Activated naive CD4-positive, alpha-beta T cell treated with anti-CD3 and anti-CD28 coated beads for 36 hours (primary cell): ENCODE measurements at regions of chr10 and their contacts with region 1.

Region 1: GRCh38 chr10:6062101-6062771 is at the start of gene IL2RA:
- DNase-seq: peak; percentile 83
- H3K4me3 Mint-ChIP-seq: peak within 1 kb of the TSS; percentile 86
- H3K27ac Mint-ChIP-seq: peak within 1 kb of the TSS; percentile 94
- H3K4me1 Mint-ChIP-seq: peaks cover 46% of the 10 kb centered on the region
- H3K27me3 Mint-ChIP-seq: no peaks in the 10 kb centered on the region
- total RNA-seq, gene IL2RA: 443 to 471 TPM

Region 2: DNA sequence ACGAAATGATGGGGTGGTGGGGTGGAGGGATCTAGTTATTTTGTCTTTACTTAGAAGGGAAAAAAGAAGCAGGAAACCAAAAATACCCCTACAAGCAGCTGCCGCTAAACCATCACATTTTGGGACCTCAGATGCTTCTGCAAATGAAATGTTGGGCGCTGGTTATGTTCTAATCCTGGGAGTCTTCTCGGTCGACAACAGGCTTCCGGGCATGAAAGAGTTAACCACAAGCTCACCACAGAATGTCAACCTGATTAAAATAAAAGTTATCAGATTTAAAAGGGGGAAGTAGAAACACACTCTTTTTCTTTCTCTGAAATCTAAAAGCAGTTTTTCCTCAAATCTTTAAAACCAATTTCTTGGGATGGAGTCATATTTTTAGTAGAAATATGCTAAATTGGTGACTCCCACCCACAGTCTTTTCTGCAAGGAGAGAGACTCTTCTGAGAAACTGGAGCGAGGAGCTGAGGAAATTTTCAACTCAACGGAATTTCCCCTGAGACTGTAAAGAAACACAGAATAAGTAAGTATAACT is 16.9 kb before region 1 on chr10:
- CTCF ChIA-PET with region 1: interaction called, 8 read pairs
- intact Hi-C with region 1: loop called (anchors 1 kb)
- DNase-seq: peak; percentile 69
- H3K4me3 Mint-ChIP-seq: peak overlapping the region; percentile 56
- H3K27ac Mint-ChIP-seq: peak overlapping the region; percentile 95
- H3K4me1 Mint-ChIP-seq: peaks cover 86% of the 10 kb centered on the region
- H3K27me3 Mint-ChIP-seq: no peaks in the 10 kb centered on the region

Region 3: GRCh38 chr10:6083523-6084475 is 21.6 kb after region 1 on chr10:
- CTCF ChIA-PET with region 1: interaction called, 27 read pairs
- intact Hi-C with region 1: loop called (anchors 1 kb)
- DNase-seq: peak; percentile 92
- H3K4me3 Mint-ChIP-seq: peak overlapping the region; percentile 67
- H3K27ac Mint-ChIP-seq: peak overlapping the region; percentile 90
- H3K4me1 Mint-ChIP-seq: peaks cover 61% of the 10 kb centered on the region
- H3K27me3 Mint-ChIP-seq: no peaks in the 10 kb centered on the region

Region 4: DNA sequence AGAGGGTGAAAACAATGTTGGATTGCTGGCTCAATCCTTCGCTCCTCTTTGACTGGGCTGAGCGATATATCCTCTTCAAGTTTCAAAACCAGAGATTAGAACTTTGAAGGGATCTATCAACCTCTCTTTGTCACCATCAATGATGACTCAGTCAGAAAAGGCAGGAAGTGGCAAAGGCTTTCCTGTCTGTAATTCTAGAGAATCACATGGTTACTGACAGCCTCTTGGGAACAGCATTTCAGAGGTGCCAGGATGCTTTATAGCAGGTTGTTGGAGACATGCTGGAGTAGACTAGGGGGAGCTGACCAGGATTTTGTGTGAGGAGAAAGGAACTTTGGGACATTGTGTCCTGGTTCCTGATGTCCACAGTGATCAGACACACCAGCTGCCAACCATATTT is 436.5 kb after region 1 on chr10:
- CTCF ChIA-PET with region 1: no interaction called
- intact Hi-C with region 1: no loop called
- DNase-seq: peak; percentile 67
- H3K4me3 Mint-ChIP-seq: peak overlapping the region; percentile 20
- H3K27ac Mint-ChIP-seq: peak overlapping the region; percentile 85
- H3K4me1 Mint-ChIP-seq: peaks cover 47% of the 10 kb centered on the region
- H3K27me3 Mint-ChIP-seq: no peaks in the 10 kb centered on the region

Region 5: DNA sequence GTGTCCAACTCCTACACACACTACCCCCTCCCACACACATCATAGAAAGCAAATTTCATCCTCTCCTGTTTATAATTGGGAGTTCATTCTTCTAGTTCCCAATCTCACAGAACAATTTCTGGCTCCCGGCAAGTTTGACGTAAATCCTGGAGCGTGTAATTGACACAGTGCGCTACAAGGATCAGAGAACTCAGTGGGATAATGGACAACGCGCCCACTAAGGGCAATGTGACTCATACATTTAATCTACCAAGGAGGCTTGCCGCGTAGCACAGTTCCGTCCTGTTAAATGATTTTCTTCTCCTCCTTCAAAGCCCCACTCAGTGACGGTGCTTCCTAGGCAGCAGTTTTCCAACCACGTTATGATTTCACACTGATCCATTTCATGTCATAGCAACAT is 1071.0 kb after region 1 on chr10:
- CTCF ChIA-PET with region 1: no interaction called
- intact Hi-C with region 1: no loop called
- DNase-seq: no peak
- H3K4me3 Mint-ChIP-seq: no peak overlapping the region
- H3K27ac Mint-ChIP-seq: no peak overlapping the region
- H3K4me1 Mint-ChIP-seq: peaks cover 7% of the 10 kb centered on the region
- H3K27me3 Mint-ChIP-seq: no peaks in the 10 kb centered on the region